Adrenal gland (tissue), 19 donors: ENCODE measurements at regions of chr6 and their contacts with region 1.

Region 1: GRCh38 chr6:100877851-100878250 is 3.3 kb downstream of the ASCC3 start:
- DNase-seq: no peak
- H3K4me3 ChIP-seq: no peak overlapping the region
- H3K27ac ChIP-seq: no peak overlapping the region
- H3K4me1 ChIP-seq: peaks cover 5 to 19% of the 10 kb centered on the region in 2 donors
- H3K27me3 ChIP-seq: no peaks in the 10 kb centered on the region
- CTCF ChIP-seq: no peak
- POLR2A ChIP-seq: no peak

Region 2: GRCh38 chr6:100704961-100705360 is 172.9 kb before region 1 on chr6:
- intact Hi-C with region 1: no loop called
- DNase-seq: no peak
- H3K4me3 ChIP-seq: no peak overlapping the region
- H3K27ac ChIP-seq: no peak overlapping the region
- H3K4me1 ChIP-seq: no peaks in the 10 kb centered on the region
- H3K27me3 ChIP-seq: no peaks in the 10 kb centered on the region
- CTCF ChIP-seq: no peak
- POLR2A ChIP-seq: no peak

Region 3: GRCh38 chr6:100823041-100823440 is 54.8 kb before region 1 on chr6:
- intact Hi-C with region 1: loop called in 1 of 2 experiments (anchors 10 kb)
- DNase-seq: no peak
- H3K4me3 ChIP-seq: no peak overlapping the region
- H3K27ac ChIP-seq: no peak overlapping the region
- H3K4me1 ChIP-seq: no peaks in the 10 kb centered on the region
- H3K27me3 ChIP-seq: no peaks in the 10 kb centered on the region
- CTCF ChIP-seq: no peak
- POLR2A ChIP-seq: no peak